ENCODE measurements at regions of chr5 and their contacts with region 1.

Region 1: DNA sequence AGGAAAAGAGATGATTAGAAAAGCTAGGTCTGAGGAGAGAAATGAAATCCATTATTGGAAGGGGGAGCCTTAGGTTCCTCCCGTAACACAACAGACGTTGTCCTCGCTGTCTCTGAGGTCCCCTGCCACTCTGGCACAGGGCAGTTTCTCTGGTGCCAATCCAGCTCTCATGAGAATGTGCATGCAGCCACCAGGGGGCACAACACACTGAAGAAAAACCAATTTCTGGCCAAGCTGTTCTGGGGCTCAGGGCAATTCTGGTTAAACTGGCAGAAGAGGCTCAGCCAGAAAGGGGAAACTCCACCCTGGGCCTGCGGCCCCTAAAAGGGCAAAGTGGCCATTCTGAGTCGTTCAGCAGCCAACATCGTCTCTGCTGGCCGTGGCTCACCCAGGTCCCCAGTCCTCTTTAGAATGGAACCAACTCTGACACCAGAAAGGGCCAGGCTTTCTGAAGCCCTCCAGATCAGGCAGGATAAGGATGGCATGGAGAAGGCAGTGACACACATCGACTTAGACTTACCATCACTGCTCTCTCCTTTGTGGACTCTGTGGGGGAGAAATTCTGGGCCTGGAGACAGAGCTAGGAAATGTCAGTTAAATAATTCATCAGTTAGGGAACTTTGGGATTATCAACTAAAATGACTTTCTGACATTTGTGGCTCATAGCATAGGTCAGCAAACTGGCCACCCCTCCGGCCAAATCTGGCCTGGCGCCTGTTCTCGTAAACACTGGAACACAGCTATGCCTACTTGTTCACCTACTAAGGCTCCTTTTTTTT is 58.5 kb upstream of the GOLPH3 start:
- DNase-seq: peak; percentile 87 to 89
- H3K4me3 ChIP-seq: no peak overlapping the region
- H3K27ac ChIP-seq: peak overlapping the region; percentile 81 to 94 (median 82)
- H3K4me1 ChIP-seq: peaks cover 30 to 62% (median 44%) of the 10 kb centered on the region in 4 donors
- H3K27me3 ChIP-seq: no peaks in the 10 kb centered on the region
- CTCF ChIP-seq: peak in 6 of 7 experiments; percentile 56 to 93 (median 80)
- EP300 ChIP-seq: no peak
- POLR2A ChIP-seq: no peak

Region 2: GRCh38 chr5:32329308-32329834 is 96.7 kb after region 1 on chr5:
- intact Hi-C with region 1: loop called (anchors 10 kb)
- DNase-seq: peak; percentile 76 to 83
- H3K4me3 ChIP-seq: no peak overlapping the region
- H3K27ac ChIP-seq: peak overlapping the region; percentile 48 to 78 (median 55)
- H3K4me1 ChIP-seq: peaks cover 23 to 32% (median 27%) of the 10 kb centered on the region in 4 donors
- H3K27me3 ChIP-seq: no peaks in the 10 kb centered on the region
- CTCF ChIP-seq: peak in 5 of 7 experiments; percentile 53 to 76 (median 68)
- EP300 ChIP-seq: no peak
- POLR2A ChIP-seq: no peak

Region 3: DNA sequence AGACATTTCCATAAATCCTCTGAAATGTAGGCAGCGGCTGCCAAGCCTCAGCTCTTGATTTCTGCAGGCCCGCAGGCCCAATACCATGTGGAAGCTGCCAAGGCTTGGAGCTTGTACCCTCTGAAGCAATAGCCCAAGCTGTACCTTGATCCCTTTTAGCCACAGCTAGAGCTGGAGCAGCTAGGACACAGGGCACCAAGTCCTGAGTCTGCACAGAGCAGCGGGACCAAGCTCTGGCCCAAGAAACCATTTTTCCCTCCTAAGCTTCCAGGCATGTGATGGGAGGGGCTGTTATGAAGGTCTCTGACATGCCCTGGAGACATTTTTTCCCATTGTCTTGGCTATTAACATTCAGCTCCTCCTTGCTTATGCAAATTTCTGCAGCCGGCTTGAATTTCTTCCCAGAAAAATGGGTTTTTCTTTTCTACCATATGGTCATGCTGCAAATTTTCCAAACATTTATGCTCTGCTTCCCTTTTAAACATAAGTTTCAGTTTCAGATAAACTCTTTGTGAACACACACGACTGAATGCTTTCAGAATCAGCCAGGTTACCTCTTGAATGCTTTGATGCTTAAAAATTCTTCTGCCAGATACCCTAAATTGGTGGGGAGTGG is 226.4 kb after region 1 on chr5:
- intact Hi-C with region 1: no loop called
- DNase-seq: no peak
- H3K4me3 ChIP-seq: no peak overlapping the region
- H3K27ac ChIP-seq: no peak overlapping the region
- H3K4me1 ChIP-seq: no peaks in the 10 kb centered on the region
- H3K27me3 ChIP-seq: no peaks in the 10 kb centered on the region
- CTCF ChIP-seq: no peak
- EP300 ChIP-seq: no peak
- POLR2A ChIP-seq: no peak

Region 4: GRCh38 chr5:32760091-32760509 is 527.5 kb after region 1 on chr5:
- intact Hi-C with region 1: no loop called
- DNase-seq: peak in 1 of 2 donors; percentile 7
- H3K4me3 ChIP-seq: no peak overlapping the region
- H3K27ac ChIP-seq: no peak overlapping the region
- H3K4me1 ChIP-seq: no peaks in the 10 kb centered on the region
- H3K27me3 ChIP-seq: no peaks in the 10 kb centered on the region
- CTCF ChIP-seq: no peak
- EP300 ChIP-seq: no peak
- POLR2A ChIP-seq: no peak